A673 (cell line): ENCODE measurements at regions of chr19 and their contacts with region 1.

Region 1: DNA sequence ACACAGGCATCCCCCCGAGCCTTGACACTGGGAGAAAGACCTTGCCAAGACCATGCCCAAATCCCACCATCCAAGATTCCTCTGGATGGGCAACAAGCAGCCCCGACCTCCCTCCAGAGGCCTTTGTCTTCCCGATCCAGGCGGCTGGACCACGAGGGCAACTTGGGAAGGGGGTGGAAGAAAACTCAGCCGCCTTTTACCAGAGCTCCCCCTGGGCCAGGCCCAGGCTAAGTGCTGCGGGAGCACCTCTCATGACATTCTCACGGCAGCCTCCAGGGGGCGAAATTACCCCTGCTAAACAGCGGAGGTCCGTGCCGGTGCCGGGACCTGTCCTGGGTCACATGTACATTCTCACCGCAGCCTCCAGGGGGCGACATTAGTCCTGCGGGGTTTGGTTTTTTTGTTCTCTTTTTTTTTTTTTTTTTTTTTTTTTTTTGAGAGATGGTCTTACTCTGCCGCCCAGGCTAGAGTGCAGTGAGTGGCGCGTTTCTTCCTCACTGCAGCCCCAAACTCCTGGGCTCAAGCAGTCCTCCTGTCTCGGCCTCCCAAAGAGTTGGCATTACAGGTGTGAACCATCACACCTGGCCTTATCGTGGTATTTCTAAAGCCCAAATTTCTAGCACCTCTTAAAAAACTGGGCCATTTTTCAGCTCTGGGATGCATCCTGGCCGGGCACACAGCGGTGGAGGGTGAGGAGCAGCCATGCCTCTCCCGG is 2.1 kb upstream of the RSPH6A start:
- DNase-seq: peak; percentile 96
- H3K4me3 ChIP-seq: no peak overlapping the region
- H3K27ac ChIP-seq: no peak overlapping the region
- H3K4me1 ChIP-seq: no peaks in the 10 kb centered on the region
- H3K27me3 ChIP-seq: no peaks in the 10 kb centered on the region
- CTCF ChIP-seq: peak; percentile 99

Region 2: DNA sequence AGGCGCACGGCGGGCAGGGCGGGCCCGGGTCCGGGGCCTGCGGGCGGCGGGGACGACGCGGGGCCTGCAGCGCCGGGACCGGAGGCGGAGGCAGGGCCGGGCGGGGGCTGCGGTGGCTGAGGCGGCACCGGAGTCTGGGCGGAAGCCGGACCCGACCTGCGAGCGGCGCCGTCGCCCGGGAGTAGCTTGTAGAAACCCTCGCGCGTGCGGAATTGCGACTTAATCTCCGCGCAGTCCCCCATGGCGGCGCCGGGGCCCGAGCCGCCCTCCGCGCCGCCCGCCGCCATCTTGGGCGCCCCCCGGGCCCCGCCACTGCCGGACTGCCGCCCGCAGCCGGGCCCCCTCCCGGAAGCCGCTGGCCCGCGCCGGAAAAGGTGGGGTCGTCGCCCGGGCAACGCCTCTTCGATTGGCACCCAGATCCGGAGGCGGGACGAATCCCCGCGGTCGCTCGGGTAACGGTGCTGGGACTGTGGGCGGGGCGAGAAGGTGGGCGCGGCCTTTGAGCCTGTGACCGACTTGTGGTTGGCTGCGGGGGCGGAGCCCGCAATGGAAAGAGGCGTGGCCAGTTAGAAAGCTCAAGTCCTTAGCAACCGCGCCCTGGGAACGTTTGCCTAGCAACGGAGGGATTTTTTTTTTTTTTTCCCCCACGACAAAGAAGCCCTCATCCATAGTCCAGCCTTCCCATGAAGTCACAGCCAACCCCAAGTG is 24.5 kb before region 1 on chr19 and contains the start of gene DMWD:
- CTCF ChIA-PET with region 1: interaction called, 17 read pairs
- POLR2A ChIA-PET with region 1: interaction called, 4 read pairs
- intact Hi-C with region 1: no loop called
- DNase-seq: peak; percentile 99
- H3K4me3 ChIP-seq: peak within 1 kb of the TSS; percentile 97
- H3K27ac ChIP-seq: peak within 1 kb of the TSS; percentile 88
- H3K4me1 ChIP-seq: peaks cover 6% of the 10 kb centered on the region
- H3K27me3 ChIP-seq: no peaks in the 10 kb centered on the region
- CTCF ChIP-seq: no peak
- total RNA-seq, gene DMWD: 79.2 and 86.7 TPM in 2 replicates

Region 3: DNA sequence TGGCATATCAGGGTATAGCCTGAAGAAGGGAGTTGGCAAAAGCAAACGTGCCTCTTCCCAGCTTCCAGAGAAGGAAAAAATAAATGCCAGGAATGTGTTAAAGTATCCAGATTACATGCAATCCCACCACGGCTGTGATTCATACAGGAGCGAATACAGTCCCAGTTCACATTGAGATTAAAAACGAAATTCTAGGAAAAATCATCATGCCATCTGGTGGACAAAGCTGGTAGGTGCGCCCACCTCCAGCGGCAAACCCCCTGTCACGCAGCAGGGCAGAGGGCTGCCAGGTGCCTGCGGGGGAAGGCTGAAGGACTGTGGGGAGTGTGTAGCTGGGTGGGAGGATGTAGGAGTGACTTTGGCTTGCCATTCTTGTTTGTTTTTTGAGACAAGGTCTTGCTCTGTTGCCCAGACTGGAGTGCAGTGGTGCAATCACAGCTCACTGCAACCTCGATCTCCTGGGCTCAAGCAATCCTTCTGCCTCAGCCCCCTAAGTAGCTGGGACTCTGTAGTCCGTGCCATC is 18.1 kb before region 1 on chr19:
- CTCF ChIA-PET with region 1: interaction called, 12 read pairs
- POLR2A ChIA-PET with region 1: interaction called, 4 read pairs
- intact Hi-C with region 1: no loop called
- DNase-seq: peak; percentile 75
- H3K4me3 ChIP-seq: no peak overlapping the region
- H3K27ac ChIP-seq: no peak overlapping the region
- H3K4me1 ChIP-seq: peaks cover 4% of the 10 kb centered on the region
- H3K27me3 ChIP-seq: no peaks in the 10 kb centered on the region
- CTCF ChIP-seq: peak; percentile 83

Region 4: GRCh38 chr19:45834970-45835369 is 17.8 kb after region 1 on chr19:
- CTCF ChIA-PET with region 1: interaction called, 13 read pairs
- POLR2A ChIA-PET with region 1: no interaction called
- intact Hi-C with region 1: no loop called
- DNase-seq: no peak
- H3K4me3 ChIP-seq: no peak overlapping the region
- H3K27ac ChIP-seq: no peak overlapping the region
- H3K4me1 ChIP-seq: no peaks in the 10 kb centered on the region
- H3K27me3 ChIP-seq: no peaks in the 10 kb centered on the region
- CTCF ChIP-seq: no peak

Region 5: GRCh38 chr19:45886427-45887199 is 69.4 kb after region 1 on chr19:
- CTCF ChIA-PET with region 1: interaction called, 12 read pairs
- POLR2A ChIA-PET with region 1: no interaction called
- intact Hi-C with region 1: no loop called
- DNase-seq: peak; percentile 97
- H3K4me3 ChIP-seq: peak overlapping the region; percentile 79
- H3K27ac ChIP-seq: peak overlapping the region; percentile 90
- H3K4me1 ChIP-seq: peaks cover 29% of the 10 kb centered on the region
- H3K27me3 ChIP-seq: no peaks in the 10 kb centered on the region
- CTCF ChIP-seq: no peak

Region 6: DNA sequence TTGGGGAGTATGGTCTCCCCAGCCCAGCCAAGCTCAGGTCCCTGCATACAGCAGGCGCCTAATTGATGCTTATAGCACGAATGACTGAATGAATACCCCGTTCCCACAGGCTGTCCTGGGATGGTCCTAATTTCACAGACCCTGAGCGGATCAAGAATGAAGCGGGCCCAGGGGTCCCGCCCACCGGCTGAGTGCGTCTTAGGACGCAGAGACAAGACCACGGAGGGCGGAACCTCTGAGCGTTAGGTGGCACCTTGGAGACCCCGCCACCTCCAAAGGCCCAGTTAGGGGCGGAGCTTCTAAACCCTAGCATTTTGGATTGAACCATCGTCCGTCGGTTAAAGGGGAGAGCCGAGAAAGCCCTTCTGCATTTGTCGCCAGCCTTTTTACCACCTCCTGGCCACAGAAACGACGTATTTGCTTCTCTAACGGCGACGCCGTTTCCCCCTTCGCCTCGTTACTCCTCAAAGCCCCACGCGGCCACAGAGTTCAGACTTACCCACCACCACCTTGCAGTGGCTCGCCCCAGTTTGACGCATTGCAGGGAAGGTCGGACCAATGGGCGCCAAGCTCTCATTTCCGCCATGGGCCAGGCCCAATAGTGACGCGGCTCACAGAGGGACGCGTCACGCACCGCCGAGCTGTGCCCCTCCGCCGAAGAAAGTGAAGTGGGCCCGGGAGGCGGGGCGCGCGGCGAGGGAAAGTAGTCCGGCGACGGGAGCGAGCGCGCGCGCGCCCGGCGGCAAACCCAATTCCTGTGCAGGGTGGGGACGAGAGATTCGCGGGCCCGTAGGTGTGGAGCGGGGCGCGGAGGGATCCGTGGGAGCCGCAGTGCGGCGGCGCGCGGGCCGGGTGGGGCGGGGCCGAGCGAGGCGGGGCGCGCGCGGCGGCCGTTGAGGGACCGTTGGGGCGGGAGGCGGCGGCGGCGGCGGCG is 783.5 kb after region 1 on chr19:
- CTCF ChIA-PET with region 1: interaction called, 10 read pairs
- POLR2A ChIA-PET with region 1: no interaction called
- intact Hi-C with region 1: no loop called
- DNase-seq: peak; percentile 98
- H3K4me3 ChIP-seq: peak overlapping the region; percentile 100
- H3K27ac ChIP-seq: peak overlapping the region; percentile 100
- H3K4me1 ChIP-seq: peaks cover 10% of the 10 kb centered on the region
- H3K27me3 ChIP-seq: no peaks in the 10 kb centered on the region
- CTCF ChIP-seq: no peak